Transverse colon (tissue), 4 donors: ENCODE measurements at regions of chr2 and their contacts with region 1.

Region 1: GRCh38 chr2:180385601-180386201 is 378.6 kb upstream of the CWC22 start:
- DNase-seq: no peak
- H3K4me3 ChIP-seq: no peak overlapping the region
- H3K27ac ChIP-seq: no peak overlapping the region
- H3K4me1 ChIP-seq: no peaks in the 10 kb centered on the region
- H3K27me3 ChIP-seq: no peaks in the 10 kb centered on the region
- CTCF ChIP-seq: no peak
- EP300 ChIP-seq: no peak
- POLR2A ChIP-seq: no peak

Region 2: GRCh38 chr2:179711375-179711774 is 674.3 kb before region 1 on chr2:
- in situ Hi-C with region 1: no loop called
- intact Hi-C with region 1: loop called (anchors 5 kb)
- DNase-seq: no peak
- H3K4me3 ChIP-seq: no peak overlapping the region
- H3K27ac ChIP-seq: no peak overlapping the region
- H3K4me1 ChIP-seq: no peaks in the 10 kb centered on the region
- H3K27me3 ChIP-seq: no peaks in the 10 kb centered on the region
- CTCF ChIP-seq: no peak
- EP300 ChIP-seq: no peak
- POLR2A ChIP-seq: no peak